HCT116 (cell line): ENCODE measurements at regions of chr1 and their contacts with region 1.

Region 1: DNA sequence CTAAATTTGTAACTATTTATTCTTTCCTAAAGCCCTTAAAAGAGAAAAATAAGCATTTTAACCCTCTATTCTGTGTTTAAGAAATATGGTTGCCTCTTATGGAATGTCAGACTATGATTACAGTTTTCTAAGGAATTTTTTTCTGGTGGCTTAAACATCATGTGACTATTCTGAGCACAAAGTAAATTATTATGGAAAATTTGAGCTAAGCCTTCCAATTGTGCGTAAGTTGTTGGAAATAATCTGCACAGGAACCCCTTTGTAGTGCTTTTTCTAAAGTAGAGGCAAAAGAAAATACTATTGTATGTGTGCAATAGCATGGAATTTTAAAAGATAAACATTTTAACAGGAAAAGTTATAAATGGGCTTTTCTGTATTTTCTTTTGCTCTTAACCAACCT is 254.8 kb downstream of the PBX1 start:
- DNase-seq: no peak
- ATAC-seq: no peak
- H3K4me3 ChIP-seq: no peak overlapping the region
- H3K27ac ChIP-seq: no peak overlapping the region
- H3K4me1 ChIP-seq: no peaks in the 10 kb centered on the region
- H3K27me3 ChIP-seq: no peaks in the 10 kb centered on the region
- CTCF ChIP-seq: no peak
- POLR2A ChIP-seq: no peak
- RAD21 ChIP-seq: no peak

Region 2: DNA sequence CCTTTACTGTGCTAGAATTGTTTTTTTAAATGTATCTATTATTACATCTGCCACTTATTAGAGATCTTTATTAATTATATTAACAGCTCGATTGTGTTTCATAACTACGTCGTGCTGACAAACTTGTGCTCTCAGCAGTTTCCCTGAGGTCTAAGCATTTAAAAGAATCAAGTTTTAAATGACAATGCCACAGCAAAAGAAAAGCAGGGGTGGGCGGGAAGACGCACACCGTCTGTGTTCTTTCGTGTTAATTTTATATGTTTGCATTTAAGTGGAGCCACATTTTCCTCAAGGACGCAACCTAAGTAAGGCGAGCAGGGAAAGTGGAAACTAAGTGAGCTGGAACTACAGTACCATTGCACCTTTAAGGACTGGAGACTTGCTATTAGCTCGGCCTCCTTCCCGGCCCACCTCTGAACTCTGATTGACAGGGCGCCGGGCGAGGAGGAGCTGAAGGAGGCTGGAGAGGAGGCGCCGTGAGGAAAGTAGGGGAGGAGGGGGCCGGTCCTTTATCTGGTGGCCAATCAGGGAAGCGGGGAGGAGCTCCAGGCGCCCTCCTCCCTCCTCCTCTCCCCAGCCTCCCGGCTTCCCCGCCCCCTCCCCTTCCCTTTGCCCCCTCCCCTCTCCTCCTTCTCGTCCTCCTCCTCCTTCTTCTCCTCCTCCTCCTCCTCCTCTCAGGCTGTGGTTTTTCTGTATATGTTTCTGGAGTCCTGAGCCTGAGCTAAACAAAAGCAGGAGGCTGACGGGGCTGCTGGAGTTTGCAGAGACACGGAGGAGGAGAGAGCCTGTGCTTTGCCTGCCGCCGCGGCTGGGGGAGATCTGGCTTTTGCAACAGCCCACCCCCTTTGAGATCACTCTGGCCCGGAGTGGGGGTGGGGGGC is 255.1 kb before region 1 on chr1 and contains the start of gene PBX1:
- CTCF ChIA-PET with region 1: no interaction called
- POLR2A ChIA-PET with region 1: no interaction called
- RAD21 ChIA-PET with region 1: no interaction called
- intact Hi-C with region 1: no loop called
- DNase-seq: peak; percentile 89
- ATAC-seq: peak; percentile 100
- H3K4me3 ChIP-seq: peak within 1 kb of the TSS; percentile 54 to 57
- H3K27ac ChIP-seq: no peak within 1 kb of the TSS
- H3K4me1 ChIP-seq: peaks cover 11 to 14% of the 10 kb centered on the region in 2 experiments; a peak in 3 of 4 replicates
- H3K27me3 ChIP-seq: no peaks in the 10 kb centered on the region
- CTCF ChIP-seq: no peak
- POLR2A ChIP-seq: peak; percentile 37
- RAD21 ChIP-seq: no peak
- total RNA-seq, gene PBX1: 29.6 TPM

Region 3: GRCh38 chr1:164774819-164775654 is 38.7 kb before region 1 on chr1:
- CTCF ChIA-PET with region 1: no interaction called
- POLR2A ChIA-PET with region 1: no interaction called
- RAD21 ChIA-PET with region 1: no interaction called
- intact Hi-C with region 1: loop called (anchors 1 kb)
- DNase-seq: no peak
- ATAC-seq: no peak
- H3K4me3 ChIP-seq: no peak overlapping the region
- H3K27ac ChIP-seq: no peak overlapping the region
- H3K4me1 ChIP-seq: peaks cover 39% of the 10 kb centered on the region in 2 experiments
- H3K27me3 ChIP-seq: no peaks in the 10 kb centered on the region
- CTCF ChIP-seq: no peak
- POLR2A ChIP-seq: no peak
- RAD21 ChIP-seq: no peak